Panc1 (cell line): ENCODE measurements at regions of chr19 and their contacts with region 1.

Region 1: DNA sequence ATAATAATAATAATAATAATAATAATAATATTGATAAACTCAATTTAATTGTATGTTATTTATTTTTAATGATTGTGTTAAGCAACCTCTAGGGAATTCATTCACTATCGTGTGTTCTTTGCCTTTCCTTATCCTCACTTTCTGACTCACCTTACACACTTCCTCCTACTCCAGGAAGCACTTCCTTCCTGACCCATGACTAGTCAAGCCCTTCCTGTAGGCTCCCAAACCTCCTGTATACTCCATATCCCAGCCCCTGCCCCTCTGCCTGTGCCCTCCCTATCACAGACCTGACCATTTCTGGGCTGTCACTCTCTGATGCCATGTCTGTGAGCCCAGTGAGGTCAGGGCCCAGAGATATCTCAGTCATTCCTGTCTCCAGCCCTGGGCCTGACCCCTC is 7.6 kb downstream of the LGALS4 start:
- DNase-seq: no peak
- ATAC-seq: 0 out of 2 replicates have a peak, but pooled peaks have one; percentile 8
- H3K4me3 ChIP-seq: no peak overlapping the region
- H3K27ac ChIP-seq: no peak overlapping the region
- H3K4me1 ChIP-seq: no peaks in the 10 kb centered on the region
- H3K27me3 ChIP-seq: no peaks in the 10 kb centered on the region
- CTCF ChIP-seq: no peak

Region 2: GRCh38 chr19:38701455-38702063 is 103.6 kb before region 1 on chr19:
- CTCF ChIA-PET with region 1: interaction called, 10 read pairs
- POLR2A ChIA-PET with region 1: no interaction called
- in situ Hi-C with region 1: no loop called
- intact Hi-C with region 1: no loop called
- DNase-seq: no peak
- ATAC-seq: peak; percentile 4; the same call in 1 of the 2 replicates
- H3K4me3 ChIP-seq: no peak overlapping the region
- H3K27ac ChIP-seq: peak overlapping the region; percentile 98
- H3K4me1 ChIP-seq: peaks cover 88% of the 10 kb centered on the region
- H3K27me3 ChIP-seq: no peaks in the 10 kb centered on the region
- CTCF ChIP-seq: no peak

Region 3: GRCh38 chr19:38917516-38918491 is 112.6 kb after region 1 on chr19:
- CTCF ChIA-PET with region 1: no interaction called
- POLR2A ChIA-PET with region 1: no interaction called
- in situ Hi-C with region 1: no loop called
- intact Hi-C with region 1: no loop called
- DNase-seq: no peak
- ATAC-seq: peak; percentile 78
- H3K4me3 ChIP-seq: no peak overlapping the region
- H3K27ac ChIP-seq: peak overlapping the region; percentile 0; the same call in 1 of the 2 replicates
- H3K4me1 ChIP-seq: peaks cover 11% of the 10 kb centered on the region
- H3K27me3 ChIP-seq: no peaks in the 10 kb centered on the region
- CTCF ChIP-seq: no peak